Uterus (tissue), 4 donors: ENCODE measurements at regions of chr5 and their contacts with region 1.

Region 1: GRCh38 chr5:127153031-127153430 is 79.7 kb upstream of the C5orf63 start:
- DNase-seq: no peak
- H3K4me3 ChIP-seq: no peak overlapping the region
- H3K27ac ChIP-seq: no peak overlapping the region
- H3K4me1 ChIP-seq: no peaks in the 10 kb centered on the region
- H3K27me3 ChIP-seq: no peaks in the 10 kb centered on the region
- CTCF ChIP-seq: no peak
- POLR2A ChIP-seq: no peak

Region 2: DNA sequence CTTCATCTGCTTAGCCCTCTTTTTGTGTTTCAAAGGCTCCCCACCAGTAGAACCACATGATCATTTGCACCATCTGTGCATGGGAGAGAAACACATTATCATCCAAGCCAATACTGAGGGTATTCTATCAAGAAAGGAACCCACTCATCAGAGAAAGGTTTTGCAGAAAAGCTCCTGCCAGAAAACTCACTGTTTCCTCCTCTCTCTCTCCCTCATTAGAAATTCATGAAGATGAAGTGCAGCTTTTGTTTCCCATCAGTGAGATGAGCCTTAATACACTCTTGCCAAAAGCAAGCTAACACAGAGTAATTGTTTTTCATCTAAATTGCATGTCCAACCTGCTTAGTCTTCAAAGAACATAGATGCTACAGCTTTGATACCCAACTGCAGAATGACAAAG is 872.2 kb before region 1 on chr5:
- intact Hi-C with region 1: no loop called
- DNase-seq: no peak
- H3K4me3 ChIP-seq: no peak overlapping the region
- H3K27ac ChIP-seq: no peak overlapping the region
- H3K4me1 ChIP-seq: no peaks in the 10 kb centered on the region
- H3K27me3 ChIP-seq: no peaks in the 10 kb centered on the region
- CTCF ChIP-seq: no peak
- POLR2A ChIP-seq: no peak

Region 3: DNA sequence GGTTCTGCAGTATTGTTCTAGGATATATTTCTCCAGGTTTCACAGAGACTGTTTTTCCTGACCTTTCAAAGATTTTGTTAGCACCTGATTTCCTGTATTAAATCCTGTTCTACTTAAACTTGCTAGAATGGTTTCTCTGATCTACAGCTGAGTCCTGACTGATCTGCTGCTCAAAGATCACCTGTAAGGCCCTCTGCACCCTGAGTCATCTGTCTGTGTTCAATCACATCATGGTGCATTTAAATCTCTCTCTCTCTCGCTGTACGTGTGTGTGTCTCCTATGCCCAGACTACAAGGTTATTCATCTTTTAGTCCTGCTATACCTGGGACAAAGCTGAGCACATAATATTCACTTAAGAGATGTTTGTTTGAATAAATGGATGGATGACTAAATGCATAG is 66.4 kb before region 1 on chr5:
- intact Hi-C with region 1: loop called (anchors 2 kb)
- DNase-seq: no peak
- H3K4me3 ChIP-seq: no peak overlapping the region
- H3K27ac ChIP-seq: no peak overlapping the region
- H3K4me1 ChIP-seq: no peaks in the 10 kb centered on the region
- H3K27me3 ChIP-seq: no peaks in the 10 kb centered on the region
- CTCF ChIP-seq: no peak
- POLR2A ChIP-seq: no peak

Region 4: DNA sequence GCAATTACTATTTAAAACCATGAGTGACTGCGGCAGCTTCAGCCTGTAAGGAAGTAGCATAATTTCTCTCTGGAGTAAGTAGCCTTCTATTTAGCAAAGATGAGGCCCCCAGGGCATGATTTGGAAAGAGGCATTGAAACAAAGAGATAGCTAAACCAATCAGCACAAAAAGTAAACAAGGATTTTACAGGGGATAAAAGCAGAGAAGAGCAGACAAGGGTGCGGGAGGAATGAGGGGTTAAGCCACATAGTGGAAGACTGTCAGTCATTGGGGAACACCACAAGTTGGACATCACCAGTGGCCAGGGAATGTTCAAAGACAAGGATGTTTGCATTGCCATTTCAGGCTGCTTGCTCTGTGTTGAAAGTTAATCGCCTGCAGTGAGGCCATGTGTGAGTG is 55.8 kb before region 1 on chr5:
- intact Hi-C with region 1: no loop called
- DNase-seq: no peak
- H3K4me3 ChIP-seq: no peak overlapping the region
- H3K27ac ChIP-seq: no peak overlapping the region
- H3K4me1 ChIP-seq: no peaks in the 10 kb centered on the region
- H3K27me3 ChIP-seq: no peaks in the 10 kb centered on the region
- CTCF ChIP-seq: no peak
- POLR2A ChIP-seq: no peak

Region 5: DNA sequence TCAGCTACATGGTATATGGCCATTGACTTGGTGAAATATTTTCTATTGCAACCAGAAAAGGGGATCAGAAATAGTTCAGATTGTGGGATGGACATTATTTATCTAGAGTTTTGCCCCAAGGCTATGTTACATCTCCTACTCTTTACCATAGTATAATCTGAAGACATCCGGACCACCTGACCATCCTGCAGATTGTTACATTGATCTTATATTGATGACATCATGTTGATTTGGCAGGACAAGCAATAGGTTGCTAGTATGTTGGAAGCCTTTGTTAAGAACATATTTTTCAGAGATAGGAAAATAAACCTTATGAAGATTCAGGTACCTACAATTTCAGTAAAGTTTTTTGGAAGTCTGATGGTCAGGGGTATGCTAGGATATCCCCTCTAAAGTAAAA is 35.4 kb before region 1 on chr5:
- intact Hi-C with region 1: no loop called
- DNase-seq: no peak
- H3K4me3 ChIP-seq: no peak overlapping the region
- H3K27ac ChIP-seq: no peak overlapping the region
- H3K4me1 ChIP-seq: no peaks in the 10 kb centered on the region
- H3K27me3 ChIP-seq: no peaks in the 10 kb centered on the region
- CTCF ChIP-seq: no peak
- POLR2A ChIP-seq: no peak